ENCODE measurements at regions of chr10 and their contacts with region 1.

Region 1: GRCh38 chr10:22988581-22989360 is 60.9 kb downstream of the ARMC3 start:
- DNase-seq: peak; percentile 71
- H3K4me3 ChIP-seq: no peak overlapping the region
- H3K27ac ChIP-seq: no peak overlapping the region
- H3K4me1 ChIP-seq: no peaks in the 10 kb centered on the region
- H3K27me3 ChIP-seq: no peaks in the 10 kb centered on the region
- CTCF ChIP-seq: peak; percentile 88

Region 2: GRCh38 chr10:22505911-22506685 is 482.7 kb before region 1 on chr10:
- intact Hi-C with region 1: no loop called
- DNase-seq: peak; percentile 51
- H3K4me3 ChIP-seq: no peak overlapping the region
- H3K27ac ChIP-seq: no peak overlapping the region
- H3K4me1 ChIP-seq: no peaks in the 10 kb centered on the region
- H3K27me3 ChIP-seq: no peaks in the 10 kb centered on the region
- CTCF ChIP-seq: no peak

Region 3: DNA sequence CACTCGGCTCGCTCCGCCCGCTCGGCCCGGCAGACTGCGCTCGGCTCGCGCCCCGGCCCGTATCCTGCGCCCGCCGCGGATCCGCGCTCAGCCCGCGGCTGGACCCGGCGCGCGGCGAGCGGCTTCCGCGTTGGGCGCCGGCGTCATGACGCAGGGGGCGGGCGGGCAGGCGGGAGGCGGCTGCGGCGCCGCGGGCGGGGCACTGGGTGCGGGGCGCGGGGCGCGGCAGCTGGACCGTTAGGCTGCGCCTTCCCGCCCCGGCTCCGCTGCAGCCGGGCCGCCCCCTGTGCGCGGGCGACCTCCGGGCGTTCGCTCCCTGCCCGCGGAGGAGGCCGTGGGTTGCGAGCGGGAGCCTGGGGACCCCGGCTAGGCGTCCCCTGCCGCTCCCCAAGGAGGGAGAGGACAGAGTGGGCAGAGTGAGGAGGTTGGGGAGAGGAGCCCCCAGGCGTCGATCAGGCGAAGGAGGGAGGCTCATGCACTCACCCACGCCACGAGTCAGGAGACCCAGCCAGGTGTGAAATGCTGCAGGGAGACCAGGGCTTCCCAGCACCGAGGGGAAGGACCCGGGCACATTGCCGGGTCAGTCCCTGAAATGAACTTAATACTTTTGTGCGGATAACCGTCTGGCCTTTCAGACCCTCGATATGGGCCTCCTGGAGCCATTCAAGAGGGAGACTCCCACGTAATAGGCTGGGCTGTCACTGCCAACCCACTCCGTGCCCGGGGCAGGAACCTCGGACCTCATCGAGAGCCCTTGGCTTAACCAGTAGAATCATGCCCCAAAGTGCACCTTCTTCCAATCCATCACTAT is 274.1 kb before region 1 on chr10 and contains the start of gene PIP4K2A:
- intact Hi-C with region 1: no loop called
- DNase-seq: peak; percentile 73
- H3K4me3 ChIP-seq: peak within 1 kb of the TSS; percentile 81
- H3K27ac ChIP-seq: peak within 1 kb of the TSS; percentile 65
- H3K4me1 ChIP-seq: peaks cover 6% of the 10 kb centered on the region
- H3K27me3 ChIP-seq: no peaks in the 10 kb centered on the region
- CTCF ChIP-seq: no peak
- total RNA-seq, gene PIP4K2A: 12.1 to 14.9 TPM

Region 4: DNA sequence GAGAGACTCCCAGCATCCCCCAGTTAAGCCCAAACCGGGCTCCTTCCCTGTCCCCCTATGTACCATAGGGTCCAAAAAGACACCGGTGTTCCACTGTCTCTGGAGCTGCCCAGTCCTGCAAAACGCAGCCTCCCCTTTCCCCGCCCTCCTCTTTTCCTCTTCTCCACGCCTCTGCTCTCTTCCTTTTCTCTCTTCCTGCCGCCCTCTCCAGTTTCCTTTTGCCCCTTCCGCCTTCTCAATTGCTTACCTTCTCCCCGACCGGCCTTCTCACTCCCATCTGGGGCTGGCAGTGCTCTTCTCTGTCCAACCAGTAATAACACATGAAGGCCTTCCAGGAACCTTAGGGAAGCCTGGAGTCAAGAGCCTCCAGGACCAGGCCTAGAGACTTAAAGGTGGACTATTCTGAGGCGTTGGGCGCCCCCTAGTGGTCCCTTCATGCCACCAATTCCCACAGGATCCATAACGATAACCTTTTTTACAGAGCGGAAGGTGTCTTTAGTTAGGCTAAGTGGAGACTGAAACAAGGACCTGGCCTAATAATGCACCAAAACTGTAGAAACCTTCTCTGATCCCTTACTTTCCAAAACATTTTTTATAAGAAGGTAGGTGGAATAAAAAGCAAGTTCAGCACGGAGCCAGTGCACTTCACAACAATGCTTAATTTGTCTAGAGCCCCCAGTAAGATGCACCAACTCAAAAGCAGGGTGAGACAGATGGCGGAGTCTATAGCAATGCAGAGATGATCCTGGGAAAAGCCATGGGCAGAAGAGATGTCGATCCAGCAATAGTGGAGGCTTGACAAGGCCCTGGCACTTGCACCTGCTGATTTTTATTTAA is 79.4 kb after region 1 on chr10:
- intact Hi-C with region 1: loop called (anchors 5 kb)
- DNase-seq: peak; percentile 85
- H3K4me3 ChIP-seq: no peak overlapping the region
- H3K27ac ChIP-seq: no peak overlapping the region
- H3K4me1 ChIP-seq: peaks cover 8% of the 10 kb centered on the region
- H3K27me3 ChIP-seq: no peaks in the 10 kb centered on the region
- CTCF ChIP-seq: peak; percentile 90